ENCODE measurements at regions of chr7 and their contacts with region 1.

Region 1: DNA sequence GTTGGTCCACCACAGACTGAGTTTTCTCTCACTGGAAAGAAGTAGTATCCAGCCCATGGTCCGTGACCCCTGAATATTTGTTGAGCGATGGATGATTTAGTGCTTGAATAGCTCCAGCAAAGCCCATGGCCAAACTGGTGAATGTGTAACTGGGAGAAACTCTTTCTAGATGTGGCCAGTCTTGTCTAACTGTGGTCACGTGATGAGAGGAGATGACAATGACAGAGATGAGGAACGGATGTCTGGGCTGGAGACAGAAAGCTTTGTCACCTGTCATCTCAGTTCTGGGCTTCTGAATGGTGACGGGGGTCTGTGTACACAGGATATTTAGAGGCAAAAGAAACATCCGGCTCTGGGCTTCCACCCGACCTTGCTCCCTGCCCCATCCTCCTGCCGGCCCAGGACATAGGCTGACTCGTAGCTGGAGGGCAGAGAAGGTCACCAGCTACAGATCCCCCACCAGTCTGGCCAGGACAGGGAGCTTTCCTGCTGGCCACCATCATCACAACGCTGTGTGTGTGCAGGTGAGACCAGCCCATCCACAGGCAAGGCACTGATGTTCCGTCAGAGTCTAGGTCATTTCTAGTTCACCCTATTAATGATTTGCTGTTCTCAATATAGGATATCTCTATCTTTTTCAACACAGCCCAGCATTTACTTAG is 152.5 kb upstream of the TNS3 start:
- DNase-seq: peak; percentile 63
- H3K4me3 ChIP-seq: no peak overlapping the region
- H3K27ac ChIP-seq: no peak overlapping the region
- H3K4me1 ChIP-seq: peaks cover 14% of the 10 kb centered on the region
- CTCF ChIP-seq: no peak

Region 2: DNA sequence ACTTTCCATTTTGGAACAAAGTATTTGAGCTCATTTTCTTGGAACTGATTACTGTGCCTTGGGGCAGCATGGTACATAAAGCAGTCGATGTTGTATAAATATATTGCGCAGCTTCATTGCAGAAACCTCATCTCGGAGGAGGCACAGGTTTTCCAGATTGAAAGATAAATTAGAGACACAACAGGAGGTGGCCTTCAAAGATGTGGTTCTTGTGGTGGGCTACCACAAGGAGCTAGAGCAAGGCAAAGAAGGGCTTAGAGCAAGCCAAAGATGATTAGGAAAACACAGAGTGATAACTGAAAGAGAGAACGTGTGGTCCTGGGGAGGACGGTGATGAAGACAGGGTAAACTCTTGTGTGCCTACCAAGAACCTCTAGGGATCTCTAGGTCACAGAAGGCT is 16.6 kb after region 1 on chr7:
- CTCF ChIA-PET with region 1: no interaction called
- POLR2A ChIA-PET with region 1: interaction called, 13 read pairs
- intact Hi-C with region 1: no loop called
- DNase-seq: no peak
- H3K4me3 ChIP-seq: no peak overlapping the region
- H3K27ac ChIP-seq: no peak overlapping the region
- H3K4me1 ChIP-seq: no peaks in the 10 kb centered on the region
- CTCF ChIP-seq: no peak